B cell (primary cell): ENCODE measurements at regions of chr14 and their contacts with region 1.

Region 1: DNA sequence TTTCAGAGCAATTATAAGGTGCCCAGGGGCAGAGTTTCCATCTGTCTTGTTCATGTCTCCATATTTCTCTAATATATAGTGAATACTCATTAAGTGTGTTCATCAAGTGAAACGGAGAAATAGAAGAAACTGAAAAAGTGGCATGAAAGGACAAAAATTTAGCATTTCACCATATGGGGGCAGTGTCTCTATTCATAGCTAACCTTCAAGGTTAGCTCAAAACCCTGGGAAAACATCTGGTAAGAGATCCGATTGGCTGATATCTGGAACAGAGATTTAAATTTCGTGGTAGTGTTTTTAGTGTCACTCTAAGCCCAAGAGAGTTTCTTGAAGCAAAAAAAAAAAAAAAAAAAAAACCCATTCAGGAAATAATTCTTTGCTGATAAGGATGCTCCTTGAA is 367.5 kb downstream of the DAD1 start:
- DNase-seq: peak; percentile 48
- ATAC-seq: no peak
- H3K4me3 ChIP-seq: no peak overlapping the region
- H3K4me3 Mint-ChIP-seq: no peak overlapping the region
- H3K27ac ChIP-seq: no peak overlapping the region
- H3K27ac Mint-ChIP-seq: no peak overlapping the region
- H3K4me1 ChIP-seq: peaks cover 13 to 15% of the 10 kb centered on the region in 2 donors
- H3K4me1 Mint-ChIP-seq: peaks cover 25% of the 10 kb centered on the region
- H3K27me3 ChIP-seq: peaks cover 0 to 12% (median 7%) of the 10 kb centered on the region in 4 experiments
- H3K27me3 Mint-ChIP-seq: peaks cover 24% of the 10 kb centered on the region
- CTCF ChIP-seq: peak; percentile 66

Region 2: DNA sequence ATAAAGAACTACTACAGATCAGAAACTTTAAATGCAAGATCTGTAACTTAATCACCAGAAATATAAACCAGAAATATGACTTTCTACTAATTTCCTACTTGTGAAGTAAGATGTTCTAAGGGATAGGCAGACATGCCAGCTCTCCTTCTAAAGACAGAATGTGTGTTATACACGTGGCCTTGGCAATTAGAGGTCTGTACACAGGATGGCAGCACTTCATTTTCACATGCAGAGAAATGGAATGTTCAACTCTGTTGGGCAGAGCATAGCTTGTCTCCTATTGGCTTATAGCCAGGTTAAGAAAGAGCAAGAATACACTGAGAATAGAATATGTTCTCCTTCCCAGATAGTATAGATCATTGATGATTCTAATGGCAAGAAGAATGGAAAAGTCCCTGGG is 36.3 kb before region 1 on chr14:
- CTCF ChIA-PET with region 1: no interaction called
- POLR2A ChIA-PET with region 1: no interaction called
- intact Hi-C with region 1: no loop called
- DNase-seq: no peak
- ATAC-seq: no peak
- H3K4me3 ChIP-seq: no peak overlapping the region
- H3K4me3 Mint-ChIP-seq: no peak overlapping the region
- H3K27ac ChIP-seq: no peak overlapping the region
- H3K27ac Mint-ChIP-seq: no peak overlapping the region
- H3K4me1 ChIP-seq: no peaks in the 10 kb centered on the region
- H3K4me1 Mint-ChIP-seq: no peaks in the 10 kb centered on the region
- H3K27me3 ChIP-seq: peaks cover 0 to 17% (median 9%) of the 10 kb centered on the region in 4 experiments
- H3K27me3 Mint-ChIP-seq: peaks cover 50% of the 10 kb centered on the region
- CTCF ChIP-seq: no peak

Region 3: GRCh38 chr14:22200977-22201605 is 20.4 kb before region 1 on chr14:
- CTCF ChIA-PET with region 1: interaction called, 10 read pairs
- POLR2A ChIA-PET with region 1: no interaction called
- intact Hi-C with region 1: no loop called
- DNase-seq: peak; percentile 49
- ATAC-seq: peak; percentile 57
- H3K4me3 ChIP-seq: no peak overlapping the region
- H3K4me3 Mint-ChIP-seq: no peak overlapping the region
- H3K27ac ChIP-seq: no peak overlapping the region
- H3K27ac Mint-ChIP-seq: no peak overlapping the region
- H3K4me1 ChIP-seq: no peaks in the 10 kb centered on the region
- H3K4me1 Mint-ChIP-seq: no peaks in the 10 kb centered on the region
- H3K27me3 ChIP-seq: peaks cover 0 to 2% (median 0%) of the 10 kb centered on the region in 4 experiments
- H3K27me3 Mint-ChIP-seq: peaks cover 20% of the 10 kb centered on the region
- CTCF ChIP-seq: peak; percentile 75

Region 4: DNA sequence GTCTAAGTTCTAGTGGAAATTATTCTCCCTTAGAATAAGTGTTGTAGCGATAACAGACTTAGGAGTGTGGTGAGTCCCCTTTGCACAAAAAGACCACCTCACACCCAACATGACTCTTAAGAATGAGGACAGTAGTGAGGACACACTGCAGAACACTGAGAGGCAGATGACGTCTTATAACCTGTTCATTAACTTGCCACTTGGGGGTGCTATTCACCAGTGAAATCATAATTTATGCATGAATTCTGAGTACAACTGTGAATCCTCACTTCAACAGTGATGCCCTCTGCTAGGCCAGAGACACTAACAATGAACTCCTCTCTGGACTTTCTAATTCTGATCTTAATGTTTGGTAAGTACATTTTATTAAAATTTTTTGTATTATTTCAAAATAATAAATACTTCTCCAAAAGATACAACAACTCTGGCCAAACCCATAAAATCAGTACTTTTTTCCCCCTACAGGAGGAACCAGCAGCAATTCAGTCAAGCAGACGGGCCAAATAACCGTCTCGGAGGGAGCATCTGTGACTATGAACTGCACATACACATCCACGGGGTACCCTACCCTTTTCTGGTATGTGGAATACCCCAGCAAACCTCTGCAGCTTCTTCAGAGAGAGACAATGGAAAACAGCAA is 92.8 kb after region 1 on chr14:
- CTCF ChIA-PET with region 1: interaction called, 14 read pairs
- POLR2A ChIA-PET with region 1: no interaction called
- intact Hi-C with region 1: loop called (anchors 5 kb)
- DNase-seq: peak; percentile 78
- ATAC-seq: peak; percentile 93
- H3K4me3 ChIP-seq: no peak overlapping the region
- H3K4me3 Mint-ChIP-seq: no peak overlapping the region
- H3K27ac ChIP-seq: no peak overlapping the region
- H3K27ac Mint-ChIP-seq: no peak overlapping the region
- H3K4me1 ChIP-seq: no peaks in the 10 kb centered on the region
- H3K4me1 Mint-ChIP-seq: peaks cover 5% of the 10 kb centered on the region
- H3K27me3 ChIP-seq: no peaks in the 10 kb centered on the region
- H3K27me3 Mint-ChIP-seq: no peaks in the 10 kb centered on the region
- CTCF ChIP-seq: peak; percentile 88

Region 5: DNA sequence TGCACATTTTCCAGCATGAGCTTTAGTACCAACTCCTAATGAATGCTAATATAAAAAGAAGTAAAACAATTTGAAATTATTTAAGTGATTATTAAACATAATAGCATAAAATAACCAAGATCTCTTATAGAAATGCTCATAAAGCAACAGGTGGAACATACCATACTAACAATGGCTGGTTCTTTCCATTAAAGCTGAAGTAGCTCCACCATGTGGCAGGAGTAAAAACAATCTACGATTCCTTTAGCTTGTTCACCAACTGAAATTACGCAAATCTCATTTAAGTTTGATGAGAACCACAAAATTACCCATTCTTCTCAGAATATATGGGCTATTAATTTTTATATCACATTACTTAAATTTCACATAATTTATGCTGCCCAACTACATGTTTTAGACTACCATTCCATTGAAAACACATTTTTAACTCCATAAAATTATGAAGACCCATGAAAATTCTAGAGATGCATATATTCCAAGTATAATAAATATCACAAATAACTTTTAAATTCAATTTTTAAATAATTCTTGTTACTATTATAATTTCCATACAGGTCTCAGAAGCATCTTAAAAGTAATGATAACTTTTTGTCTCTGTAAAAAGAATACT is 153.9 kb after region 1 on chr14:
- CTCF ChIA-PET with region 1: interaction called, 39 read pairs
- POLR2A ChIA-PET with region 1: interaction called, 3 read pairs
- intact Hi-C with region 1: loop called (anchors 1 kb)
- DNase-seq: peak; percentile 66
- ATAC-seq: peak; percentile 47
- H3K4me3 ChIP-seq: no peak overlapping the region
- H3K4me3 Mint-ChIP-seq: no peak overlapping the region
- H3K27ac ChIP-seq: no peak overlapping the region
- H3K27ac Mint-ChIP-seq: no peak overlapping the region
- H3K4me1 ChIP-seq: peaks cover 0 to under 1% of the 10 kb centered on the region in 2 donors
- H3K4me1 Mint-ChIP-seq: no peaks in the 10 kb centered on the region
- H3K27me3 ChIP-seq: no peaks in the 10 kb centered on the region
- H3K27me3 Mint-ChIP-seq: no peaks in the 10 kb centered on the region
- CTCF ChIP-seq: peak; percentile 79

Region 6: GRCh38 chr14:22380571-22381407 is 159.3 kb after region 1 on chr14:
- CTCF ChIA-PET with region 1: interaction called, 39 read pairs
- POLR2A ChIA-PET with region 1: no interaction called
- intact Hi-C with region 1: loop called (anchors 1 kb)
- DNase-seq: peak; percentile 13
- ATAC-seq: no peak
- H3K4me3 ChIP-seq: no peak overlapping the region
- H3K4me3 Mint-ChIP-seq: peak overlapping the region; percentile 23
- H3K27ac ChIP-seq: peak overlapping the region in 1 of 2 donors; percentile 4
- H3K27ac Mint-ChIP-seq: peak overlapping the region; percentile 47
- H3K4me1 ChIP-seq: peaks cover 44 to 48% of the 10 kb centered on the region in 2 donors
- H3K4me1 Mint-ChIP-seq: peaks cover 50% of the 10 kb centered on the region
- H3K27me3 ChIP-seq: no peaks in the 10 kb centered on the region
- H3K27me3 Mint-ChIP-seq: no peaks in the 10 kb centered on the region
- CTCF ChIP-seq: no peak